Activated CD4-positive, alpha-beta T cell treated with anti-CD3 and anti-CD28 coated beads, Interleukin-2, amount 10 ng/mL, durations not matched to agents 24 days and 14 days (primary cell): ENCODE measurements at regions of chr1 and their contacts with region 1.

Region 1: DNA sequence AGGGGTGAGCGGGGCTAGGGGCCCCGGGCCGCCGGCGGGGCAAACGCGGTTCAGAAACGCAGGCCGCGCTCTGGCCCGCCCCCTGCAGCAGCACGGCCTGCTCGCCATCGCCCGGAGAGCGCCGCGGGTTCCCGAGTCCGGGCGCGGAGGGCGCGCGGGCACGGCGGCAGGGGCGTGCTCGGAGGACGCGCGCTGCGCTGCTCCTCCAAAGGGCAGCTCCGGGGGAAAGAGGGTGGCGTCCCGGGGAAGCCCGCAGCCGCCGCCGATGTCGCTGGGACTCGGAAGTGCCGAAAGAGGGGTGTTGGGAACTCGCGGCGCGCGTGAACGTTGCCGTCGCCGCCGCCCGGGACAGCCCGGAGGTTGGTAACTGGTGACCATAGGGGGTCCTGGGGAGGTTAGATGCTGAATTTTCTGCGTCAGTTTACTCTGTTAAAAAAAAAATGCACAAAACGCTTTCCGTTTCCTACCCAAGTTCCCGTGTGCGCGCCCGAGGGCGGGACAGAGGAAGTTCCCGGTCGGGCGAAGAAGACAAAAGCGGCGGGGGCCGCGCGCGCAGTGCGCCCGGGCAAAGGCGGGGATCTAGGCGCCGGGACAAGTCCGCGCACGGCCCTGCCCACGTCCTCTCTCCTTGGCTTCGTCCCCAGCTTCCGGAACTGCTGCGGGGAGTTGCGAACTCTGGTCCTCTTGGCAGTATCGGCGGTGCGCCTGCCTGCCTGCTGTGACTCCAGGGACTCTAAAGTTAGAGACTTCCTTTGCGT is at the start of gene HHAT:
- DNase-seq: peak; percentile 91
- H3K4me3 Mint-ChIP-seq: peak within 1 kb of the TSS; percentile 96
- H3K27ac Mint-ChIP-seq: peak within 1 kb of the TSS; percentile 96
- H3K4me1 Mint-ChIP-seq: peaks cover 34% of the 10 kb centered on the region
- H3K27me3 Mint-ChIP-seq: peaks cover 16% of the 10 kb centered on the region
- total RNA-seq, gene HHAT: 0.47 and 0.69 TPM in 2 replicates

Region 2: GRCh38 chr1:209827384-209828262 is 501.3 kb before region 1 on chr1 and contains the start of gene UTP25:
- intact Hi-C with region 1: loop called (anchors 10 kb)
- DNase-seq: peak; percentile 98
- H3K4me3 Mint-ChIP-seq: peak within 1 kb of the TSS; percentile 93
- H3K27ac Mint-ChIP-seq: peak within 1 kb of the TSS; percentile 86
- H3K4me1 Mint-ChIP-seq: peaks cover 43% of the 10 kb centered on the region
- H3K27me3 Mint-ChIP-seq: peaks cover 4% of the 10 kb centered on the region
- total RNA-seq, gene UTP25: 17.2 and 17.6 TPM in 2 replicates

Region 3: GRCh38 chr1:210340311-210340710 is 11.4 kb after region 1 on chr1:
- intact Hi-C with region 1: loop called (anchors 1 kb)
- DNase-seq: no peak
- H3K4me3 Mint-ChIP-seq: no peak overlapping the region
- H3K27ac Mint-ChIP-seq: peak overlapping the region; percentile 50
- H3K4me1 Mint-ChIP-seq: peaks cover 19% of the 10 kb centered on the region
- H3K27me3 Mint-ChIP-seq: peaks cover 14% of the 10 kb centered on the region

Region 4: DNA sequence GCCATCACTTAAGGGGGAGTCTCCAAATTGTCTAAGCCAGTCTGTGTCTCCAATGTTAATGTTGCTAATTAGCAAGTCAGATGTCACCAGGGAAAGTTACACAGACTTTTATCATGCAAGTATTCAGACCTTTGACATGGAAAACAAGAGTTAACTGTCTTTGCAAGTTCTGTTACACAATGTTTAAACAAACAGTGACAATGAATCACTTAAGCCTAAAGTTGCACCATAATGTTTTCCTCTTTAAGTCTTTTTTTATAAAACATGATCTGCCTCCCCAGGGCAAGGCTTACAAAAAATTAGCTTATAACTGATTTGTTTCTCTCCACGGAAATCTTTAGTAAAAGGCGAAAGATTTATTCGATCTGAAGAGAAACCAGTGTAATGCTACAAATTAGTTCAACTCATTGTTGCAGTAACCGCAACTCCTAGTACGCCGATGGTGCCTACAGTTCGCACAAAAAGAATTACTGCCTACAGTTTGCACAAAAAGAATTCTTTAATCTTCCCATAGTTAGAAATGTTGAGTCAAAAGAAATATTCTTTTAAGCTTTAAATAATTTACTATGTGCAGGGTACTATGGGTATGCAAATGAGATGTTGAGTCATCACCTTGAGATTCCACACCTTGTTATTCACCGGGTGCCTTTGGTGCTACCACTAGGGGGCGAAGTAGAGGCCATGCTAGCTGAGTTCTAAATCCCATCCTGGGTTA is 45.1 kb after region 1 on chr1:
- intact Hi-C with region 1: loop called (anchors 2 kb)
- DNase-seq: peak; percentile 88
- H3K4me3 Mint-ChIP-seq: no peak overlapping the region
- H3K27ac Mint-ChIP-seq: peak overlapping the region; percentile 75
- H3K4me1 Mint-ChIP-seq: peaks cover 9% of the 10 kb centered on the region
- H3K27me3 Mint-ChIP-seq: peaks cover 13% of the 10 kb centered on the region

Region 5: GRCh38 chr1:211258756-211259637 is 930.1 kb after region 1 on chr1 and contains the start of gene RCOR3:
- intact Hi-C with region 1: loop called (anchors 1 kb)
- DNase-seq: peak; percentile 96
- H3K4me3 Mint-ChIP-seq: peak within 1 kb of the TSS; percentile 96
- H3K27ac Mint-ChIP-seq: peak within 1 kb of the TSS; percentile 97
- H3K4me1 Mint-ChIP-seq: peaks cover 13% of the 10 kb centered on the region
- H3K27me3 Mint-ChIP-seq: no peaks in the 10 kb centered on the region
- total RNA-seq, gene RCOR3: 38.0 and 39.8 TPM in 2 replicates